Activated naive CD4-positive, alpha-beta T cell treated with anti-CD3 and anti-CD28 coated beads for 36 hours (primary cell): ENCODE measurements at regions of chr17 and their contacts with region 1.

Region 1: DNA sequence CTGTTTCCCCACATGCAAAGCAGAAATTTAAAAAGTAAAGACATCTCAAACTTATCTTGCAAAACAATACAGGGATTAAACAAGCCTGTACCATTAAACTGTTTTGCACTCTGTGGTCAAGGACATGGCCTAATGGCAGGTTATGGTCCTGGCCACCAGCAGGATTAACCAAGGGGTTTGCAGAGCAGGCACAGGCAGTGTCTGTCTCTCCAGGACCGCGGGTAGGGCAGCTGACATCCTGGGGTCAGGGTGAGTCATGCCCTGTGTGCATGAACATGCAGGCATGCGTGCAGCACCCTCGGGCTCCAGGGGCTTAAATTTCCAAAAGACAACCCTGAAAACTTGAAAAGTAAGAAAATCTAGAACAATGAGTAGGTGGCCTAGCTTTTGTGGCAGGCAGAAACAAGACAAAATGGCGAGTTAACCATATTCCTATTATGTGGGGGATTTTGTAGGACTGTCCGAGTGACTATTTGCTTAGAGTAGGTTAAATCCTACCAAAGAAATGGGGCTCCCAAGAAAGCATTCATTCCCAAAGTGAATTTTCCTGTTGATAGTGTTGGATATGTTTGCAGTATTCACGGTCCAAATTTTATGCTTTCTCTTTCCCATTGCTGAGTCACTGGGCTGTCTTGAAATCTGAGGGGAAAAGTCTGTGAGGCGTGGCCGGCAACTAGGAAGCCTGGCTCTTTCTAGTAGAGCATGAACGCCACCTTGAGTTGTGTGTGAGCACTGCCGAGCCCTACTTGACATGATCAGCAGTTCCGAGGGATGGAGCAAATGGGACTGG is 158.4 kb upstream of the FAM20A start:
- DNase-seq: peak; percentile 85
- H3K4me3 Mint-ChIP-seq: peak overlapping the region; percentile 47
- H3K27ac Mint-ChIP-seq: no peak overlapping the region
- H3K4me1 Mint-ChIP-seq: peaks cover 11% of the 10 kb centered on the region
- H3K27me3 Mint-ChIP-seq: peaks cover 2% of the 10 kb centered on the region

Region 2: GRCh38 chr17:68613739-68614298 is 145.7 kb before region 1 on chr17:
- CTCF ChIA-PET with region 1: no interaction called
- intact Hi-C with region 1: loop called (anchors 5 kb)
- DNase-seq: peak; percentile 47
- H3K4me3 Mint-ChIP-seq: no peak overlapping the region
- H3K27ac Mint-ChIP-seq: no peak overlapping the region
- H3K4me1 Mint-ChIP-seq: no peaks in the 10 kb centered on the region
- H3K27me3 Mint-ChIP-seq: peaks cover 19% of the 10 kb centered on the region

Region 3: GRCh38 chr17:68640242-68640989 is 119.1 kb before region 1 on chr17:
- CTCF ChIA-PET with region 1: no interaction called
- intact Hi-C with region 1: no loop called
- DNase-seq: no peak
- H3K4me3 Mint-ChIP-seq: no peak overlapping the region
- H3K27ac Mint-ChIP-seq: no peak overlapping the region
- H3K4me1 Mint-ChIP-seq: no peaks in the 10 kb centered on the region
- H3K27me3 Mint-ChIP-seq: peaks cover 19% of the 10 kb centered on the region